ENCODE measurements at regions of chrX and their contacts with region 1.

Region 1: GRCh38 chrX:17242470-17242869 is 132.5 kb upstream of the NHS start:
- DNase-seq: no peak
- H3K4me3 ChIP-seq: no peak overlapping the region
- H3K27ac ChIP-seq: no peak overlapping the region
- H3K4me1 ChIP-seq: no peaks in the 10 kb centered on the region
- H3K27me3 ChIP-seq: no peaks in the 10 kb centered on the region
- CTCF ChIP-seq: peak; percentile 51 to 69 (median 62)
- EP300 ChIP-seq: no peak
- POLR2A ChIP-seq: no peak

Region 2: GRCh38 chrX:17082831-17083230 is 159.6 kb before region 1 on chrX:
- intact Hi-C with region 1: no loop called
- DNase-seq: no peak
- H3K4me3 ChIP-seq: no peak overlapping the region
- H3K27ac ChIP-seq: no peak overlapping the region
- H3K4me1 ChIP-seq: peaks cover 0 to 17% (median 4%) of the 10 kb centered on the region in 4 donors
- H3K27me3 ChIP-seq: no peaks in the 10 kb centered on the region
- CTCF ChIP-seq: no peak
- EP300 ChIP-seq: no peak
- POLR2A ChIP-seq: no peak

Region 3: GRCh38 chrX:17120816-17121215 is 121.7 kb before region 1 on chrX:
- intact Hi-C with region 1: loop called (anchors 5 kb)
- DNase-seq: no peak
- H3K4me3 ChIP-seq: no peak overlapping the region
- H3K27ac ChIP-seq: no peak overlapping the region
- H3K4me1 ChIP-seq: no peaks in the 10 kb centered on the region
- H3K27me3 ChIP-seq: no peaks in the 10 kb centered on the region
- CTCF ChIP-seq: no peak
- EP300 ChIP-seq: no peak
- POLR2A ChIP-seq: no peak

Region 4: GRCh38 chrX:17590892-17591740 is 348.6 kb after region 1 on chrX:
- intact Hi-C with region 1: loop called (anchors 2 kb)
- DNase-seq: peak; percentile 83
- H3K4me3 ChIP-seq: peak overlapping the region in 2 of 4 donors; percentile 8 to 18
- H3K27ac ChIP-seq: peak overlapping the region in 3 of 4 donors; percentile 61 to 76 (median 65)
- H3K4me1 ChIP-seq: peaks cover 0 to 23% (median 2%) of the 10 kb centered on the region in 4 donors
- H3K27me3 ChIP-seq: no peaks in the 10 kb centered on the region
- CTCF ChIP-seq: peak; percentile 37 to 59 (median 52)
- EP300 ChIP-seq: no peak
- POLR2A ChIP-seq: no peak

Measured in sigmoid colon (tissue), 7 donors.